ENCODE measurements at regions of chr19 and their contacts with region 1.

Region 1: DNA sequence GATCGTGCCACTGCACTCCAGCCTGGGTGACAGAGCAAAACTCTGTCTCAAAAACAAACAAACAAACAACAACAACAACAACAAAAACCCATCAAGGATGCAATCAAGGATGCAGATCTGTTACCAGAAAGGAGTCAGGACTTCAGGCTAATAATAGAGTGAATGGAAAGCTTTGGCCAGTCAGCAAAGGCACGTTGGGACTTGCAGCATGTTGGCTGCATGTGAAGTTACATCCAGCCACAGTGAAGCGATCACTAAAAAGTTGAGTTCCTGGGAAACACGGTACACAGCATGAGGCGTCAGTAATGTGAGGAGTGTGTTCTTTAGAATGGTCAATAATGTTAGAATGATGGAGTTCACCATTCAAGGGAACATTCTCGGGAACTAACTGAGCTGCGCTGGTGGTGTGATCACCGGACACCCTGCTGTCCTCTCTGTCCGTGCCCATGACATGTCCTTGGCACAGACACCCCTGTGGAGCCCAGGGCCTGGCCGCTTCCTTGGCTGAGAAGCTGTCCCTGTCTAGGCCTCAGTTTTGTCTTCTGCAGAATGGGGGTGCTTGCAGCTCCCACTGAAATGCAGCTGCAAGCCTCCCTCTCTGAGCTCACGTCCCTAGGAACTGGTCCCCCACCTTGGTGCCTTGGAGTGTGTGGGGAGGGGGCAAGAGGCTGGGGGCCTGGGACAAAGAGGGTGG is 2.3 kb upstream of the LGALS7B start:
- DNase-seq: no peak
- H3K4me3 ChIP-seq: no peak overlapping the region
- H3K27ac ChIP-seq: no peak overlapping the region
- H3K4me1 ChIP-seq: no peaks in the 10 kb centered on the region
- H3K27me3 ChIP-seq: no peaks in the 10 kb centered on the region
- CTCF ChIP-seq: no peak
- POLR2A ChIP-seq: no peak

Region 2: DNA sequence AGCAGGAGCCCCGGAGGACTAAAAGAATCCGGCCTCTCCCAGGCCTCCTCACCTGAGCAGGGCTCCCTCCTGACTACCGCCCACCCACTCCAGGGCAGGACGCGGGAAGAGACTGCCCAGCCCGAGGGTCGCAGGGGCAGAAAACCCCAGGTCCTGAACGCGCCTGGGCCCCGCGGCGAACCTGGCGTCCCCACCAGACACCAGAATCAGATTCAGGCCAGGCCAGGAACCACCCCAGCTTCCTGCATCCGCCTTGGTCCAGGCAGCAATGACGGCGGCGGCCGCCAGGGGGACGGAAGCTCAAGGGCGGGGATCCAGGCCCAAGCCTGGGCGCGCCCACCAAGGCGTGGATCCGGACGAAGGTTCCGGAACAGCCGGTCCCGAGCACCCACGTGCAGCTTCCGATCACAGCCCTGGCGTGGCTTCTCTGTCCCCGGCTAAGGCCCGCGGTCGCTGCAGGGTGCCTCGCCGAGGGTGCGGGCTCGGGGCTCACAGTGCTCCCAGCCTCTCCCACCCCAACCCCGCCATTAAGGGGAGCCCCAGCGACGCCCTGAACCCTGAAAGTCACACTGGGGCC is 17.0 kb before region 1 on chr19:
- CTCF ChIA-PET with region 1: interaction called, 12 read pairs
- POLR2A ChIA-PET with region 1: no interaction called
- dilution Hi-C with region 1: no loop called
- intact Hi-C with region 1: no loop called
- DNase-seq: peak; percentile 70
- H3K4me3 ChIP-seq: peak overlapping the region in 1 of 3 experiments; percentile 18
- H3K27ac ChIP-seq: no peak overlapping the region
- H3K4me1 ChIP-seq: peaks cover 4% of the 10 kb centered on the region
- H3K27me3 ChIP-seq: no peaks in the 10 kb centered on the region
- CTCF ChIP-seq: peak; percentile 79 to 84
- POLR2A ChIP-seq: no peak

Region 3: GRCh38 chr19:38894968-38895367 is 108.2 kb after region 1 on chr19:
- CTCF ChIA-PET with region 1: no interaction called
- POLR2A ChIA-PET with region 1: no interaction called
- dilution Hi-C with region 1: no loop called
- intact Hi-C with region 1: no loop called
- DNase-seq: no peak
- H3K4me3 ChIP-seq: no peak overlapping the region
- H3K27ac ChIP-seq: no peak overlapping the region
- H3K4me1 ChIP-seq: peaks cover 8% of the 10 kb centered on the region
- H3K27me3 ChIP-seq: no peaks in the 10 kb centered on the region
- CTCF ChIP-seq: no peak
- POLR2A ChIP-seq: no peak

Measured in endothelial cell of umbilical vein (primary cell).